Activated CD4-positive, alpha-beta T cell treated with anti-CD3 and anti-CD28 coated beads, Interleukin-2, amount 10 ng/mL, durations not matched to agents 24 days and 14 days (primary cell): ENCODE measurements at regions of chr15 and their contacts with region 1.

Region 1: DNA sequence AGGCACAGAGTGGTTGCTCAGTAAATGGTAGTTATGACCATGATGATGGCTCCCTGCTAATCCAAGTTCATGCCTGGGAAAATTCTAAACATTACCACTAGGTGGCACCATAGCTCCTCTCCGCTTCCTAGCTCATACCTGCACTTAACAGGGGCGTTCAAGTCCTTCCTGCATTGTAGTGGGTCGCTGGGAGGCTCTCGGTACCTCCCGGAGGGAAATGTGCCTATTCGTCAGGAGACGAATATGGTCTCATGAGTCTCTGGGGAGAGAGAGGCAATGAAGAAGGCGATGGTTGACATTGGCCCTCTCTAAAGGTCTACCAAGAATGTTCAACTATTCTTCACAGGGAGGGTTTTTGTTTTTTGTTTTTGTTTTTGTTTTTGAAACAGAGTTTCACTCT is 10.9 kb downstream of the MESP1 start:
- DNase-seq: peak; percentile 90
- H3K4me3 Mint-ChIP-seq: peak overlapping the region; percentile 12
- H3K27ac Mint-ChIP-seq: no peak overlapping the region
- H3K4me1 Mint-ChIP-seq: peaks cover 2% of the 10 kb centered on the region
- H3K27me3 Mint-ChIP-seq: peaks cover 12% of the 10 kb centered on the region

Region 2: GRCh38 chr15:89442671-89443307 is 297.3 kb before region 1 on chr15:
- intact Hi-C with region 1: no loop called
- DNase-seq: peak; percentile 84
- H3K4me3 Mint-ChIP-seq: no peak overlapping the region
- H3K27ac Mint-ChIP-seq: no peak overlapping the region
- H3K4me1 Mint-ChIP-seq: no peaks in the 10 kb centered on the region
- H3K27me3 Mint-ChIP-seq: peaks cover 4% of the 10 kb centered on the region

Region 3: GRCh38 chr15:89874926-89875564 is 134.9 kb after region 1 on chr15:
- intact Hi-C with region 1: loop called (anchors 5 kb)
- DNase-seq: peak; percentile 93
- H3K4me3 Mint-ChIP-seq: no peak overlapping the region
- H3K27ac Mint-ChIP-seq: peak overlapping the region; percentile 5
- H3K4me1 Mint-ChIP-seq: peaks cover 2% of the 10 kb centered on the region
- H3K27me3 Mint-ChIP-seq: no peaks in the 10 kb centered on the region

Region 4: GRCh38 chr15:90086868-90087268 is 346.7 kb after region 1 on chr15:
- intact Hi-C with region 1: loop called (anchors 2 kb)
- DNase-seq: peak; percentile 86
- H3K4me3 Mint-ChIP-seq: no peak overlapping the region
- H3K27ac Mint-ChIP-seq: peak overlapping the region; percentile 51
- H3K4me1 Mint-ChIP-seq: peaks cover 8% of the 10 kb centered on the region
- H3K27me3 Mint-ChIP-seq: no peaks in the 10 kb centered on the region